Heart left ventricle (tissue), 16 donors: ENCODE measurements at regions of chr4 and their contacts with region 1.

Region 1: DNA sequence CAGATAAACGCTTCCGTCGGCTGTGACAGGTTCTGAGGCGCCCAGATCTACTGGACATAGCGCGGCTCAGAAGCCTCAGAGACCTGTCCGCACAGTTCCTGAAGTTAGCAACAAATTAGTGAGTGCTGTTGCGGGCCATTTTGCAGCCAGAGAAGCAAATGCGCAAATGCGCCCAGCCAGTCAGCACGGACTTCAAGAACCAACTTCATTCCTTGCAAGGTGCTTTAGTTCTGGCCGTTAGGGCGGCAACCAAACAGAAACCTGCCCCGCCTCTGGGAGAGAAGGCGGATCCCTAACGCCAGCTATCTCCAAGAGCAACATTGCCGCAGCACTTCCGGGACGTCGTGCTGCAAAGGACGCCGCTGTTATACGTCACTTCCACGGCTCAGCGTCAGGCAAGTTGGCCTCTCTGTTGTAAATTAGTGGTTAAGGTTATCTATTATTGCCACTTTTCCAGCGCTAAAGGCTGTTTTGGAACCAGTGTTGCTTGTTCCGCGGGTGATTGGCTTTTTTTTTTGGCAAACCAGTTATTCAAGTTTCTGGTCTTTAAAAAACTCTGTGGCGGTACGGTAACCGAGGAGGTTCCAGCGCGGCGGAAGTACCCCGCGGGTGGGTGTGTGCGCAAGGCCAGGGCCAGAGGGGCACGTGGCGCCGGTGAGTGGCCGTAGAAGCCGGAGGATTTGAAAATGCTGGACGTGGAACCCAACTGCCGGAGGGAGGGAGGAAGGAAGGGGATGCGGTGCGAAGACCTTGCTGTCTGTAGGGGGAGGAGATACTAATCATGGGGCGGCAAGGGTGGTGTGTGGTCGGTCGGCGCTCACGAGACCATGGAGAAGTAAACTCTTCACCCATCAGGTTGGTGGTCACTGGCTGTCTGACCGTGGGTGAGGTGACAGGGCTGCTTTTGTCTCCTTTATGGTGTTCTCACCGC is at the start of gene GAR1:
- DNase-seq: peak; percentile 87 to 93 (median 90)
- ATAC-seq: peak; percentile 99 to 100 (median 100)
- H3K4me3 ChIP-seq: peak within 1 kb of the TSS; percentile 71 to 92 (median 80)
- H3K27ac ChIP-seq: peak within 1 kb of the TSS; percentile 39 to 93 (median 84)
- H3K4me1 ChIP-seq: peaks cover 0 to 21% (median 13%) of the 10 kb centered on the region in 12 donors
- H3K27me3 ChIP-seq: no peaks in the 10 kb centered on the region
- CTCF ChIP-seq: peak in 1 of 12 donors; percentile 16
- POLR2A ChIP-seq: peak in 1 of 2 donors; percentile 48
- total RNA-seq, gene GAR1: 3.2 to 10.9 (median 8.5) TPM

Region 2: GRCh38 chr4:108620101-108620932 is 1195.1 kb before region 1 on chr4 and contains the start of gene RPL34:
- intact Hi-C with region 1: loop called in 1 of 10 experiments (anchors 5 kb)
- DNase-seq: peak; percentile 96 to 99 (median 97)
- ATAC-seq: peak; percentile 100
- H3K4me3 ChIP-seq: peak within 1 kb of the TSS; percentile 38 to 92 (median 78)
- H3K27ac ChIP-seq: peak within 1 kb of the TSS; percentile 54 to 88 (median 80)
- H3K4me1 ChIP-seq: peaks cover 0 to 46% (median 20%) of the 10 kb centered on the region in 12 donors
- H3K27me3 ChIP-seq: no peaks in the 10 kb centered on the region
- CTCF ChIP-seq: no peak
- POLR2A ChIP-seq: peak in 1 of 2 donors; percentile 85
- total RNA-seq, gene RPL34: 334 to 856 (median 719) TPM

Region 3: DNA sequence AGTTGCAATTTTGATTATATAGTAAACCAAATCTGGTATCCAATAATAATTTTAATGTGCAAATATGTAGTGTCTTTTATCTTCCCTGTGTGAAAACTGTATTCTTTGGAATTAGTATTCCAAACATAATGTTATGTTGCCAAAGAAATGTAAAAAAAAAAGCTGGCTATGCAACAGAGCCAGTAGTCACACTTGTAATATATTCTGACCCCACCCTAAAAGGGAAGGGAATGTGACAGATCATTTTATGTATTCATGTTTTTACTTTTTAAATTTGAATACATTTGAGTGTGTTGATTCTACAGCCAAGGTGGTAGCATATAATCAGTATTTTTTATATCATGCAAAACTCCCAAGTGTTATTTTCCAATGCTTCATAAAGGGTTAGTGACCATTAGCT is 283.2 kb before region 1 on chr4:
- intact Hi-C with region 1: loop called in 1 of 10 experiments (anchors 10 kb)
- DNase-seq: no peak
- ATAC-seq: no peak
- H3K4me3 ChIP-seq: no peak overlapping the region
- H3K27ac ChIP-seq: no peak overlapping the region
- H3K4me1 ChIP-seq: no peaks in the 10 kb centered on the region
- H3K27me3 ChIP-seq: no peaks in the 10 kb centered on the region
- CTCF ChIP-seq: no peak
- POLR2A ChIP-seq: no peak

Region 4: GRCh38 chr4:109559983-109560686 is 255.3 kb before region 1 on chr4 and contains the start of gene MCUB:
- intact Hi-C with region 1: loop called in 2 of 10 experiments (anchors 10 kb)
- DNase-seq: peak; percentile 85 to 94 (median 88)
- ATAC-seq: peak; percentile 84 to 99 (median 98)
- H3K4me3 ChIP-seq: peak within 1 kb of the TSS; percentile 50 to 95 (median 78)
- H3K27ac ChIP-seq: peak within 1 kb of the TSS; percentile 33 to 95 (median 82)
- H3K4me1 ChIP-seq: peaks cover 0 to 31% (median 7%) of the 10 kb centered on the region in 12 donors
- H3K27me3 ChIP-seq: peaks cover 0 to 7% (median 0%) of the 10 kb centered on the region in 9 donors
- CTCF ChIP-seq: no peak
- POLR2A ChIP-seq: peak in 1 of 2 donors; percentile 37
- total RNA-seq, gene MCUB: 2.6 to 15.1 (median 4.7) TPM

Region 5: GRCh38 chr4:109729718-109730618 is 85.4 kb before region 1 on chr4 and contains the start of gene PLA2G12A:
- intact Hi-C with region 1: loop called in 2 of 10 experiments (anchors 1 to 5 kb)
- DNase-seq: peak; percentile 66 to 83 (median 70)
- ATAC-seq: peak; percentile 84 to 97 (median 94)
- H3K4me3 ChIP-seq: peak within 1 kb of the TSS; percentile 78 to 98 (median 92)
- H3K27ac ChIP-seq: peak within 1 kb of the TSS; percentile 8 to 90 (median 76)
- H3K4me1 ChIP-seq: peaks cover 0 to 20% (median 12%) of the 10 kb centered on the region in 12 donors
- H3K27me3 ChIP-seq: no peaks in the 10 kb centered on the region
- CTCF ChIP-seq: no peak
- POLR2A ChIP-seq: peak in 1 of 2 donors; percentile 64
- total RNA-seq, gene PLA2G12A: 32.6 to 68.5 (median 58.5) TPM

Region 6: DNA sequence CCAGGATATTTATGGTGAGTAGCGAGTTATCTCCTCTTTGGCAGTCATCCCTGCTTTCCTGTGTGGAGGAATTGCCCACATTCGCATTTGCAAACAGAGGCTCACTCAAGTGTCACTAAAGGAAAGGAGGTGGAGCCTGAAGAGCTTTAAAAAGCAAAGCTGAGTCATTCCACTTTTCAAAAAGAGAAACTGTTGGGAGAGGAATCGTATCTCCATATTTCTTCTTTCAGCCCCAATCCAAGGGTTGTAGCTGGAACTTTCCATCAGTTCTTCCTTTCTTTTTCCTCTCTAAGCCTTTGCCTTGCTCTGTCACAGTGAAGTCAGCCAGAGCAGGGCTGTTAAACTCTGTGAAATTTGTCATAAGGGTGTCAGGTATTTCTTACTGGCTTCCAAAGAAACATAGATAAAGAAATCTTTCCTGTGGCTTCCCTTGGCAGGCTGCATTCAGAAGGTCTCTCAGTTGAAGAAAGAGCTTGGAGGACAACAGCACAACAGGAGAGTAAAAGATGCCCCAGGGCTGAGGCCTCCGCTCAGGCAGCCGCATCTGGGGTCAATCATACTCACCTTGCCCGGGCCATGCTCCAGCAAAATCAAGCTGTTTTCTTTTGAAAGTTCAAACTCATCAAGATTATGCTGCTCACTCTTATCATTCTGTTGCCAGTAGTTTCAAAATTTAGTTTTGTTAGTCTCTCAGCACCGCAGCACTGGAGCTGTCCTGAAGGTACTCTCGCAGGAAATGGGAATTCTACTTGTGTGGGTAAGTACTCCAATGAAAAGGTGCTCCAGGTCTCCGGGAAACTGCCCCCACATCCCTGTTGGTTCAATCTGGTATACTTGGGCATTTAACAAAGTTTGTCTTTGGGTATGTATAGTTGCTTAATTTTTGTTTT is 97.5 kb after region 1 on chr4 and contains the start of gene EGF:
- intact Hi-C with region 1: loop called in 1 of 10 experiments (anchors 5 kb)
- DNase-seq: peak in 3 of 5 donors; percentile 23 to 34 (median 23)
- ATAC-seq: peak; percentile 76 to 92 (median 90)
- H3K4me3 ChIP-seq: peak within 1 kb of the TSS; percentile 8 to 54 (median 39)
- H3K27ac ChIP-seq: peak within 1 kb of the TSS in 11 of 12 donors; percentile 33 to 79 (median 65)
- H3K4me1 ChIP-seq: peaks cover 0 to 15% (median 0%) of the 10 kb centered on the region in 12 donors
- H3K27me3 ChIP-seq: no peaks in the 10 kb centered on the region
- CTCF ChIP-seq: no peak
- POLR2A ChIP-seq: peak; percentile 60 to 77
- total RNA-seq, gene EGF: 5.4 to 15.0 (median 9.7) TPM